Psoas muscle (tissue), 8 donors: ENCODE measurements at regions of chr1 and their contacts with region 1.

Region 1: DNA sequence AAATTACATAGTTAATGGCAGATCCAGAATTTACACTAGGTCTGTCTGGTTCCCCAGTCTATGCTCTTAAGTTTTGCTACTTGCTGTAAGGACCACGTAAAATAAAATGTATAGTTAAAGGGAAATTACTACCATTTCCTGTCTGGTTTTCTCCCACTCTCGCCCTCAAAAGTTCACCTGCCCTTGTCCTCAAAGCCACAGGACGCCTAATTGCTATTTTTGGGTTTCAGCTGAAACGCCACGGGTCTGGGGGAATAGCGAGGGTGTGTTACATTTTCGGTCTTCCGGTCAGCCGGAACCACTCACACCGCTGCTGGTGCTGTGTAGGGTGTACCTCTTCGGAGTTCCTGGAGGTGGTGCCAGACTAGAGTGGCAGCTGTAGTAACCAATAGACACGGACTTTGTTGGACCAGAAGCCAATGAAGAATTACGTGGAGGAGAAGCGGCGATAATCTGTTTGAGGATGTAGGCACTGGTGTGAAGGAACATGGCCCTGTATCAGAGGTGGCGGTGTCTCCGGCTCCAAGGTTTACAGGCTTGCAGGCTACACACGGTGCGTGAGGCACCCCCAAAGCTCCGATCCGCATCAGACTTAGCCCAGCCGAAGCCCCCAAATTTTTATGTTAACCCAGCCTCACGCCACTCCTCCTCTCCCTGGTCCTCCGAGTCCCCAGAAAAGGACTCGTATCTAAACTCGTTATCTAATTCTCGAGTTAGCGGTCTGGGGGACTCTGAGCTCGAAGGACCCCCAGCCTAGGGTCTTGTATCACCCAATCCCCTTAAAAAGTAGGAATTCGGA is at the start of gene TARS2:
- DNase-seq: peak; percentile 88 to 94
- ATAC-seq: peak; percentile 100
- H3K4me3 ChIP-seq: peak within 1 kb of the TSS; percentile 92
- H3K27ac ChIP-seq: peak within 1 kb of the TSS; percentile 90
- H3K4me1 ChIP-seq: peaks cover 10% of the 10 kb centered on the region
- H3K27me3 ChIP-seq: no peaks in the 10 kb centered on the region
- CTCF ChIP-seq: peak; percentile 33
- total RNA-seq, gene TARS2: 20.8 to 44.5 (median 32.9) TPM

Region 2: DNA sequence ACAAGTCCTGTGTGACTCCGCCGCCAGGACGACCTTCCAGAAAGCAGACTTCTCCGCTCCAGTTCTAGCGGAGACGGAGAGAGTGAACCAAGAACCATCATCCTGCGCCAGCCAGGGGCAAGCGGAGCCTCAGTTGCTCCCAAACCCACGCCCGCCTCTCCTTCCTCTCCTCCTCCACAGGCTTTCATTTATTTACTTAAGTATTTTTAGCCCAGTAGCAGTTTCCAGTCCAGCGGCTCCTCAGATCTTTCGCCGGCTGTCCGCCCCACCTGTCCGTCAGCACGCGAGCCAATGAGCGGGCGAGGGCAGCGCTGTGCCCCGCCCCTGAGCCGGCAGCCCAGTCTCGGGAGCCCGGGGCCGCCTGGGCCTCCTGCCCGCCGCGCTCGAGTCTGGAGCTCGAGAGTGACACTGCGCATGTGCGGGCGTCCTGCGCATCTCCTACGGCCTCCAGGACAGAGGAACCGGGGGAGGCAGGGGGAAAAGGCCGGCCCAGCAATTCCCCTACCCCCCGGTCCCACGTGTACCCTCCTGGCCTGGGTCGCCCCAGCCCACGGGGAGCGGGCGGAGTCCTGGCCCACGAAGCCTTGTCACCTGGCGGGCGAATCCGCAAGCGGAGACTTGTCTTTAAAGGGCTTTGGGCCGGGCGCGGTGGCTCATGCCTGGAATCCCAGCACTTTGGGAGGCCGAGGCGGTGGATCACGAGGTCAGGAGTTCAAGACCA is 28.3 kb after region 1 on chr1 and contains the start of gene FALEC:
- intact Hi-C with region 1: loop called in 1 of 2 experiments (anchors 2 kb)
- DNase-seq: peak; percentile 98 to 99
- ATAC-seq: peak; percentile 98 to 99 (median 99)
- H3K4me3 ChIP-seq: peak within 1 kb of the TSS; percentile 74
- H3K27ac ChIP-seq: peak within 1 kb of the TSS; percentile 94
- H3K4me1 ChIP-seq: peaks cover 6% of the 10 kb centered on the region
- H3K27me3 ChIP-seq: no peaks in the 10 kb centered on the region
- CTCF ChIP-seq: no peak
- total RNA-seq, gene FALEC: not detected

Region 3: DNA sequence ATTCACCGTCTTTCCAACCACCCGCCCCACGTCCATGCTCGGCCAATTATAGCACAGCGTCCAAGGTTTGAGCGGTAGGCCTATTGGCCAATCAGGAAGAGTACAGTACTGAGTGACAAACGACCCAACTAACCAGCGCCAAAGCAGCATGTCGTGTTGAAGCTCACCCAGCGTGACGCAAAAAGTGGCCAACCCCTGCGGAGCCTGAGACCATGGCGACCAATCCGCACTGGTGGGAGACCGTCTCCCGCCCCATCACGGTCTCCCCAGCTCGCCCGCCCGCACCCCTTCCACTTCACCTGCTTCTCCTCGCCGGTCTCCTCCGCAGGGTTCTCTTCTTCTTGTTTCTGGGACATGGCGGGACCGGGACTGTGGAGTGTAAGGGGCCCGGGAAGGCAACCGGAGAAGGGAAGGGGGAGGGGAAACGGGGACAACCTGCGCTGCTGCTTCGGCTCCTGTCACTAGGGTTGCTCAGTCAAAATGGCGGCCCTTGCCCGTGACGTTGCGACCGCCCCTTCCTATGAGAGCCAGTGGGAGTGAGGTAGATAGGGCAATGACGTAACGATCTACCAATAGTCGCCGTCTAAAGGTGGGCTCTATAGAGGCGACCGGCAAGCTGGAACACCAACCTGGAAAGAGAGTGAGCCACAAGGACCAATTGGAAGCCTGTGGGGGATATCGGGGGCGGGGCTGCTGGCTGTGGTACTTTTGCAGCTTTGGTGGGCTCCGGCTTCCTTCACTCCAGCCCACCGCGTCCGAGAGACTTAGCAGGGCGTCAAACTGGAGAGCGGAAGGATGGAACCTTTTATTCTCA is 142.2 kb after region 1 on chr1 and contains the start of gene ENSA:
- intact Hi-C with region 1: loop called in 1 of 2 experiments (anchors 10 kb)
- DNase-seq: peak; percentile 97 to 99
- ATAC-seq: peak; percentile 93 to 96 (median 94)
- H3K4me3 ChIP-seq: peak within 1 kb of the TSS; percentile 77
- H3K27ac ChIP-seq: peak within 1 kb of the TSS; percentile 93
- H3K4me1 ChIP-seq: peaks cover 30% of the 10 kb centered on the region
- H3K27me3 ChIP-seq: no peaks in the 10 kb centered on the region
- CTCF ChIP-seq: no peak
- total RNA-seq, gene ENSA: 120 to 196 (median 162) TPM